ENCODE measurements at regions of chr17 and their contacts with region 1.

Region 1: GRCh38 chr17:56592487-56593085 is 913 bp upstream of the NOG start:
- DNase-seq: peak; percentile 61
- H3K4me3 ChIP-seq: peak overlapping the region; percentile 6 to 38 (median 10)
- H3K27ac ChIP-seq: no peak overlapping the region
- H3K4me1 ChIP-seq: peaks cover 38 to 39% of the 10 kb centered on the region in 2 donors
- H3K27me3 ChIP-seq: no peaks in the 10 kb centered on the region
- CTCF ChIP-seq: peak; percentile 29 to 100 (median 95)
- POLR2A ChIP-seq: no peak

Region 2: GRCh38 chr17:56549501-56549900 is 43.1 kb before region 1 on chr17:
- intact Hi-C with region 1: no loop called
- DNase-seq: no peak
- H3K4me3 ChIP-seq: no peak overlapping the region
- H3K27ac ChIP-seq: no peak overlapping the region
- H3K4me1 ChIP-seq: no peaks in the 10 kb centered on the region
- H3K27me3 ChIP-seq: no peaks in the 10 kb centered on the region
- CTCF ChIP-seq: no peak
- POLR2A ChIP-seq: no peak

Region 3: DNA sequence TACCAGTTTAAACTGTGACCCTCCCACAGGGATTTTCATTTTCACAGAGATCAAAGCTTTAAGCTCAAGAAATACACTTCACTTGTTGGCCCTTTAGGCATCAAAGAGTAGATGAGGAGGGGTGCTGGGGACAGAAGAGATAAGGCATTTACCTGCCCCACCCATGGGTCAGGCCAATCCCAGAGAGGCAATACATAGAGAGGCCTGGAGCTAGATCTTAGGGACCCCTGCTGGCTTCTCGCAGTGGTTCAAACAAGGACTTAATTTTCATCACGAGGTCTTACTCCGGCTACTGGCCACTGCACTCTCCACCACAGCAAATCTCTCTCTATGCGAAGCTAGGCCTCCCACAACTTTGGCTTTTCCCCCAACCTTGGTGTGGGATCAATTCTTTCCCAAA is 47.5 kb after region 1 on chr17:
- intact Hi-C with region 1: loop called (anchors 5 kb)
- DNase-seq: no peak
- H3K4me3 ChIP-seq: no peak overlapping the region
- H3K27ac ChIP-seq: no peak overlapping the region
- H3K4me1 ChIP-seq: no peaks in the 10 kb centered on the region
- H3K27me3 ChIP-seq: no peaks in the 10 kb centered on the region
- CTCF ChIP-seq: no peak
- POLR2A ChIP-seq: no peak

Region 4: GRCh38 chr17:56661916-56662315 is 69.3 kb after region 1 on chr17:
- intact Hi-C with region 1: loop called (anchors 5 kb)
- DNase-seq: no peak
- H3K4me3 ChIP-seq: no peak overlapping the region
- H3K27ac ChIP-seq: no peak overlapping the region
- H3K4me1 ChIP-seq: no peaks in the 10 kb centered on the region
- H3K27me3 ChIP-seq: no peaks in the 10 kb centered on the region
- CTCF ChIP-seq: no peak
- POLR2A ChIP-seq: no peak

Region 5: DNA sequence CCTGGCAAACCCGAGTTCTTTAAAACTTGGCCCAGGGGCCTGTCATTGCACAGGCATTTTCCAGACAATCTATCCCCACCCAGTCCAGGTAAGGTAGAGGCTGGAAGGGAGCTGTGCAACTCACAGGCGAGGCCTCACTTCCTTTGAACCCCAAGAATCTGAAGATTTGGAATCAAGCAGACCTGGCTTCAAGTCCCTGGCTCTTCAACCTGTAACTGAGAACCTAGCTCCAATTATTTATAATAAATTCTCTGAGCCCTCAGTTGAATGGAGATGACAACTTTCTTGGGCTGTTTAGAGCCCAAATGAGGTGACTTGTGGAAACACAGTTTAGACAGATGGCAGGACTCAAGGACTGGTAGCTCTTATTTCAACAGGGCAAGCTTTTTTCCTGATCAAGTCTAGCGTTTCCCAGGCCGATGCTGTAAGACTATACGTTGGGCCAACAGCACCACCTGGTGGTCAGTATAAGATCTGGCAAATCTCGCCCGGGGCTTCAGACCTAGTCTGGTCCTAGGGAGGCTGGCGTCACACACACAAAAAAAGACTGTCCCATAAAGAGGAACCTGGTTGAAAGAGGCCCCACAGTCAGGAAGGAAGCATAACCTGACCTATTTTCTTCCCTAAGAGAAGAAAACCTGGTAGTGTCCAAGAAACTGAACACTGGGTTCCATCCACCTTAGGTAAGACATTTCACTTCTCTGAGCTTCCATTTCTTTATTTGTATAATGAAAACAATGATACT is 123.2 kb after region 1 on chr17:
- intact Hi-C with region 1: loop called (anchors 2 kb)
- DNase-seq: peak; percentile 78 to 85
- H3K4me3 ChIP-seq: no peak overlapping the region
- H3K27ac ChIP-seq: no peak overlapping the region
- H3K4me1 ChIP-seq: no peaks in the 10 kb centered on the region
- H3K27me3 ChIP-seq: no peaks in the 10 kb centered on the region
- CTCF ChIP-seq: peak; percentile 58 to 79 (median 76)
- POLR2A ChIP-seq: no peak

Measured in thyroid gland (tissue), 4 donors.